GM18951 (cell line): ENCODE measurements at regions of chr11 and their contacts with region 1.

Region 1: DNA sequence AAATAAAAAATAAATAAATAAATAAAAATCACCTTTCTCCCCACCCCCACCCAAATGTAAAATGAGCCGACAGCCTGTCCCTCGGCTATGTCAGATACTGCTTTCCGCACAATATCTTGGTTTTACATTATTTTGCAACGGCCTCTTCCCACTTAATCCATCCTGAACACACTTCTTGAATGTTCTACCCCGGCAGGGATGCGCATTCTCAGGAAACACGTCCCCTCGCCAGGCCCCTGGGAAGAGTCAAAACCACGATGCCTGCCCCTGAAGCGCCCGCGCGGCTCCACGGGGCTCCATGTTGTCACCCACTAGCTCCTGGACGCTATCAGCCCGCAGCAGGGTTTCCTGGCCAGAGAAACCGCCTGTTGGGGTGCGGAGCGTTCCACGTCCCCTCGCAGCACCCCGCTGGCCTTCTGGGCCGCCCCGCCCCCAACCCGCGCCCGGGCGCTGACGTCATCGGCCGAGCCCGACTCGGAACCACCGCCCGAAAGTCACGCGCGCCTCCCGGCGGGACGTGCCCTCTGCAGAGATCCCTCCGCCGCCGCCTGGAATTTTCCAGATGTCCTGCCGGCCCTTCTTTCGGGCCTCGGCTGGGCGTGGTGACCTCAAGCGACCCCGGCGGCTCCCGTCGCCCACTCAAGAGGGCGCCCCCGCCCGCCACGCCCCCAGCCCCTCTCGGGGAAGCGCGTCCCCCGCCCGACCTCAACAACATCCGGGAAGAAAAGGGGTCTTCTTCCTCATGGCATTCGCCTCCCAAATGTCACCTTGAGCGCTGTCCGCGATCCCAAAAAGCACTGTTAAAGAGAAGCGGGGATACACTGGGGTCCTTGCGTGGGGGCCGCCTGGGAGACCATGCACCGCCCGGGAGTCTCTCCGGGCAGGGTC is 551 bp upstream of the NEAT1 start:
- POLR2A ChIP-seq: peak; percentile 61

Region 2: GRCh38 chr11:65500387-65501185 is 78.5 kb after region 1 on chr11:
- in situ Hi-C with region 1: loop called (anchors 5 kb)
- POLR2A ChIP-seq: peak; percentile 85

Region 3: GRCh38 chr11:65606876-65607613 is 185.0 kb after region 1 on chr11:
- in situ Hi-C with region 1: no loop called
- POLR2A ChIP-seq: no peak

Region 4: DNA sequence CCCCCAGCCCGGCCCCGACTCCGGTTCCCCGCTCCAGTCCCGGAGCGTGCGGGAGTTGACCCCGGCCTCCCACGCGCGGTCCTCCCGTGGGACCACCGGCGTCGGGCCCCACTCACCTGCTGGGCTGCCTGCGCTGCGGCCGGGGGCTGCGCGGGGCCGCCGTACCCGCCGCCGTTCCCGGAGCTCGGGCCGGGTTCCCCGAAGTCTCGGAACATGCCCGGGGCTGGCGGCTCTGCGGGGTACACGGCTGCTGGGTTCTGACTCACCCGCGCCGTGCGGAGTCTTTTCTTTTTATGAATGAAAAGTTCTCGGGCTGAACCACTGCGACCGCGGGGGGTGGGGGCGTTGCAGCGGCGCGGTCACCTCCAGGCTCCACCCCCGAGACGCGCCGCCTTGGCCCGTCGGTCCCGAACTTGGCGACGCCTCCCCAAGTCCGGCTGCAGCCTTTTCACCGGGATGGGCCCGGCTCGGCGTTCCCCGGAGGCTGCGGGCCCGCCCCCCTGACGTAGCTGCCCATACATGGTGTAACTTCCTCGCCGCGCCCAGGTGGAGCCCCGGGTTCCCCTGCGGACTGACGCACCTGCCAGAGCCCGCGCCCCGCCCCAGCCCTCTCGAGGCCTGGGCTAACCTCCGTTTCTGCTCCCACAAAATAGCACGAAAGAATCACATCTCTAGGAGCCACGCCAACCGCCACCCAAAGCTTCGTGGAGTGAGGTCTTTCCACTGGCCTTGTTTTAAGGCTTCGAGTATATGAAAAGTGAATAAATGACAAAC is 478.3 kb after region 1 on chr11 and contains the start of gene FOSL1:
- in situ Hi-C with region 1: no loop called
- POLR2A ChIP-seq: peak; percentile 74